ENCODE measurements at regions of chr14 and their contacts with region 1.

Region 1: DNA sequence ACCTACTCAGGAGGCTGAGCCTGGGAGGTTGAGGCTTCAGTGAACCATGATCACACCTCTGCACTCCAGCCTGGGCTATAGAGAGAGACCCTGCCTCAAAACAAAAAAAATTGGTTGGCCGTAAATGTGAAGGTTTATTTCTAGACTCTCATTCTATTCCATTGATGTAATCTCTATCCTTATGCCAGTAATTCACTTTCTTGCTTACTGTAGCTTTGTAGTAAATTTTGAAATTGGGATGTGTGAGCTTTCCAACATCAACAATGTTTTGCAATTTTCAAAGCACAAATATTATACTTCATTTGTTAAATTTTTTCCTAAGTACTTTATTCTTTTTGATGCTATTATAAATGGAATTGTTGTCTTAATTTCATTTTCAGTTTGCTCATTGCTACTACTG is 24.6 kb downstream of the LIN52 start:
- DNase-seq: no peak
- H3K4me3 Mint-ChIP-seq: no peak overlapping the region
- H3K27ac Mint-ChIP-seq: no peak overlapping the region
- H3K4me1 Mint-ChIP-seq: no peaks in the 10 kb centered on the region
- H3K27me3 Mint-ChIP-seq: no peaks in the 10 kb centered on the region
- CTCF ChIP-seq: no peak

Region 2: DNA sequence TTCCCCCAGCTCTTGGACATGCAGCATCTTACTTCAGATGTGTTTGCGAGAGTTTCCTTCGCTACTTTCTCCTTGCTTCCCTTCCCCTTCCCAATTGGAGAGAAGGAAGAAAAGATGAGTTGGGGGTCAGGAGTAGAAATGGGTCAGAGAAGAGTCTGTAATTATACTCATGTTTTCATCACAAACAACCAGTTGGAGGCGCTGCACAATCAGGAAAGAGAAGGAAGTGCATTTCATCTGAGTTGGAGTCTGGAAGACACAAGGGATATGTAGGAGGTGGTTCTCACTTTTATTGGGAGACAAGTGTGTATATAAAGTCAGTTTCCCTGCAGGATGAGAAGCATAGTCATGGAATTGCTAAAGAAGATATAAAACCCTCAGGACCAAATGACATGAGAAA is 98.6 kb after region 1 on chr14:
- CTCF ChIA-PET with region 1: no interaction called
- intact Hi-C with region 1: loop called (anchors 10 kb)
- DNase-seq: no peak
- H3K4me3 Mint-ChIP-seq: no peak overlapping the region
- H3K27ac Mint-ChIP-seq: no peak overlapping the region
- H3K4me1 Mint-ChIP-seq: no peaks in the 10 kb centered on the region
- H3K27me3 Mint-ChIP-seq: peaks cover 33% of the 10 kb centered on the region
- CTCF ChIP-seq: no peak

Region 3: DNA sequence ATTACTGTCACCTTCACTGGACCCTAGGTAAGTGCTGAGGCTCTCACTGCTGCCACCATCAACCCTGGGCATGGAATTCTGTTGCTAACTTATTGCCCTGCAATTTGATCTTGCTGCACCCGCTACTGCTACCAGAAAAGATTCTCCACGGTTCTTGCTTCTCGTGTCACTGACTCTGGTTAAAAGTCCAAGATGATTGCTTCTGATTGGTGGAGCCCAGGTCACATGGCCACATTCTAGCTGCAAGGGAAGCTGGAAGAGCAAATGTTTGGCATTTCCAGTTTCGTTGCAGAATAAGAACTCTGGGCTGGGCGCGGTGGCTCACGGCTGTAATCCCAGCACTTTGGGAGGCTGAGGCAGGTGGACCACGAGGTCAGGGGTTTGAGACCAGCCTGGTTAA is 122.4 kb after region 1 on chr14:
- CTCF ChIA-PET with region 1: no interaction called
- intact Hi-C with region 1: no loop called
- DNase-seq: no peak
- H3K4me3 Mint-ChIP-seq: no peak overlapping the region
- H3K27ac Mint-ChIP-seq: no peak overlapping the region
- H3K4me1 Mint-ChIP-seq: no peaks in the 10 kb centered on the region
- H3K27me3 Mint-ChIP-seq: peaks cover 73% of the 10 kb centered on the region
- CTCF ChIP-seq: no peak

Region 4: DNA sequence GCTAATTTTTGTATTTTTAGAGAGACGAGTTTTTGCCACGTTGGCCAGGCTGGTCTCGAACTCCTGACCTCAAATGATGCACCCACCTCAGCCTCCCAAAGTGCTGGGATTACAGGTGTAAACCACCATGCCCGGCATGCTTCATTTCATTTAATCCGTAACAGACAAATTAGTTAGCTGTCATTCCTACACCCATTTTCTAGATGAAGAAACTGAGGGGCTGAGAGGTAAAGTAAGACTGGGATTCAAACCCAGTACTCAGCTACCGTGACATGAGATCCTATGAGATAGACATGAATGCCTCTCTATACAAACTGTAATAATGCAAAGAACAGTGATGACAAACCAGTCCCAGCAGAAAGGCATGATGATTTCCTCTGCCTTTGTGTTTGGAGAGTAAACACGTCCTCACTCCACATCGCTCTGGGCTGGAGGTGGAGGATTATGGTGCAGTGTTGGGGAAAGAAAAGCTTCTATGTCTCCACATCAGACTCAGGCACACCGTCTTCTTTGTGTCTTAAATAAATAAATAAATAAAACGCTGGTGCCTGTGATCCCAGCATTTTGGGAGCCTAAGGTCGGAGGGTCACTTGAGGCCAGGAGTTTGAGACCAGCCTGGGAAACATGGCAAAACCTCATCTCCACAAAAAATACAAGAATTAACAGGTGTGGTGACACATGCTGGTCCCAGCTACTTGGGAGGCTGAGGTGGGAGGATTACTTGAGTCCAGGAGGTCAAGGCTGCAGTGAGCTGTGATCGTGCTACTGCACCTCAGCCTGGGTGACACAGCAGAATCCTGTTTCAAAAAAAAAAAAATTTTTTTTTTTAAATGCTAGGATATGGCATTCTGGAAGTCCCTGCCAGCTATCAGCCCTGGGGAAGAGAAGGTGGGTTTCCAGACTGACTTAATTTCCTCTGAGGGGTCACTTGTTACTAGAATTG is 140.3 kb after region 1 on chr14:
- CTCF ChIA-PET with region 1: no interaction called
- intact Hi-C with region 1: loop called (anchors 1 kb)
- DNase-seq: no peak
- H3K4me3 Mint-ChIP-seq: no peak overlapping the region
- H3K27ac Mint-ChIP-seq: no peak overlapping the region
- H3K4me1 Mint-ChIP-seq: peaks cover 11% of the 10 kb centered on the region
- H3K27me3 Mint-ChIP-seq: peaks cover 56% of the 10 kb centered on the region
- CTCF ChIP-seq: no peak

Region 5: DNA sequence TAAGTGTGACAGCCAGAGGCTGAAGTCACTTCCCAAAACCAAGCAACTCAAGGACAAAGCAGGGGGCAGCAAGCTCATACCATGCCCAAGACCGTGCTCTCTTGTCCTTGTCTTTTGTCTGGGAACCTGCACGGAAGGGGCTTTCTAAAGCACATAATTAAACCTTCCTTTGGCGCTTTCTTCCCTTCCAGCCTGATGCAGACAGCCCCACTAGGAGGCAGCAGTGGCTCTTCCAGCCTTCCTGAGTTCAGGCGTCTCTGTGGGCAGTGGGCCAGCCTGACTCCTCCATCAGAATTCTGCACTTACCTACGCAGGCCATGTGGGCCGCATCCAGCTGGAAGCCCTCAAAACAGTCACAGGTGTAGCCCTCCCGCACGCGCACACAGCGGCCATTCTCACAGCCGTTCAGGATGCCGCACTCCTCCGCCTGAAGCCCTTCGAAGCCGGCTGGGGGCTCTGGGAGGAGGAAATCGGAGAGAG is 391.8 kb after region 1 on chr14:
- CTCF ChIA-PET with region 1: no interaction called
- intact Hi-C with region 1: no loop called
- DNase-seq: peak; percentile 36
- H3K4me3 Mint-ChIP-seq: no peak overlapping the region
- H3K27ac Mint-ChIP-seq: no peak overlapping the region
- H3K4me1 Mint-ChIP-seq: no peaks in the 10 kb centered on the region
- H3K27me3 Mint-ChIP-seq: no peaks in the 10 kb centered on the region
- CTCF ChIP-seq: no peak

Measured in Calu3 (cell line).